ENCODE measurements at regions of chr2 and their contacts with region 1.

Region 1: DNA sequence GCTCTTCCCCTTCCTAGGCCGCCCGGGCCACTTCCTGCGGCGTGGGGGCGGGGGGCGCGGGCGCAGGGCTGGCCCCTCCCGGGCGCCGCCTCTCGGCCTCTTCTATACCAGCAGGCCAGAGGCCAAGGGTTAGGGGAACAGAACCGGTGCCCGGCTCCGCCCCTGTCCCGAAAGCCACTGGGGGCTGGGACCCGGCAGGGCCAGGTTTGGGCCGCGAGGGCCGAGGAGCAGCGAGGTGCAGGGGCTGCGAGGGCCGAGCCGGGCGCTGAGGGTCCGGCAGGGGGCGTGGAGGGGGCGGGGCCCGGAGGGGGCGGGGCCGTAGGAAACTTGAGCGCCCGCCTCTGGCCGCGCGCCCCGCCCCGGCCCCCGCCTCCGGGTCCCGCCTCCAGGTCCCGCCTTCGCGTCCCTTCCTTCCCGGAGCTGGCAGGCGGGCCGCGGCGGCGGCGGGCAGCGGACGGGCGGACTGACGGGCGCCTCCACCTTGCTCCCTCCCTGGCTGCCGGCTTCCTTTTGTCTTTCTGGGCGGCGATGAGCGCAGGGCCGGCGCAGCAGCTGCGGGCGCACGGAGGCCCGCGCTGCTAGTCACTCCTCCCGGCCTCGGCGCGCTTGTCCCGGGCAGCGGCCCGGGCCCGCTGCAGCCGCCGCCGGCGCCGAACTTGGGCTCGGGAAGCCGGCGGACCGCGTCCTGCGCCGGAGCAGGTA is at the start of gene HPCAL1:
- DNase-seq: peak; percentile 100
- H3K4me3 ChIP-seq: peak within 1 kb of the TSS; percentile 64 to 80
- H3K27ac ChIP-seq: peak within 1 kb of the TSS; percentile 15 to 85; a peak in 3 of 4 replicates
- H3K4me1 ChIP-seq: peaks cover 11 to 59% of the 10 kb centered on the region in 2 experiments
- H3K27me3 ChIP-seq: no peaks in the 10 kb centered on the region
- CTCF ChIP-seq: peak; percentile 63
- EP300 ChIP-seq: no peak
- RAD21 ChIP-seq: peak; percentile 34; the same call in 1 of the 2 replicates
- polyA plus RNA-seq, gene HPCAL1: 34.6 and 77.0 TPM in 2 replicates

Region 2: DNA sequence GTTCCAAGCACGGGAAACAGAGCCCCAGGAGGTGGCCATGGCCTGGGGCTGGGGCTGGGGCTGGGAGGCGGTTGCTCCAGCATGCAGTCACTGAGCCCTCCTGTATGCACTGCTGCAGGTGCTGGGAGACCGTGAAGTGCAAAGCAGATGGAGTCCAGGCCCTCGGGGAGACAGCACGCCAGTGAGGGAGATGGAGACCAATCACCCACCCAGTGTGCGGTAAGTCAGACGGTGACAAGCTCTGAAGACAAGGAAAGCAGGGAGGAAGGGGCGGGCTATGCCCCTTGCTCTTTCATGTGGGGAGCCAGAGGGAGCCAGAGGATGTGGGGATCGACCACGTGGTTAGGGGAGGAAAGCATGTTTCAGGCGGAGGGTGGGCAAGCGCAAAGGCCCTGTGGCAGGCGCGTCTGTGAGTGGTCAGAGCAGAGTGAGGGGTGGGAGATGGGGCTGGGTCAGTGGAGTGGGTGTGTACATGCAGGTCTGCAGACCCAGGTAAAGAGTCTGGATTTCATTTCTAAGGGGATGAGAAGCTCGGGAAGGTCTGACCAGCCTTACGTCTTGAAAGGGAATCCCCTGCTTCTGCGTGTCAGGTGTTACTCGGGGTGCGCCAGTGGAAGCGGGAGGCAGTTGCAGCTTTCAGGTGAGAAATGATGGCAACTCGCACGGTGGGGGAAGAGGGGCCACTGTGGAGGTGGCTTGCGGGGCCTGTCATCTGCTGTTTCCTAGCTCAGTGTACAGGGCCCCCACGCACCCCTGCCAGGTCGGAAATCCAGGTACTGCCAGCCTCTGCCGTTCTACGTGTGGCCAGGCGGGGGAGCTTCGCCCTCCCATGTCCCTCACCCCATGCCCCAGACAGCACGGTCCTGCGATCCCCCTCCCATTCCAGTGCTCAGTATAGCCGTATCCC is 160.6 kb before region 1 on chr2:
- CTCF ChIA-PET with region 1: interaction called, 32 read pairs
- POLR2A ChIA-PET with region 1: no interaction called
- DNase-seq: peak; percentile 88
- H3K4me3 ChIP-seq: no peak overlapping the region
- H3K27ac ChIP-seq: no peak overlapping the region
- H3K4me1 ChIP-seq: peaks cover 0 to 2% of the 10 kb centered on the region in 2 experiments; a peak in 1 of 4 replicates
- H3K27me3 ChIP-seq: no peaks in the 10 kb centered on the region
- CTCF ChIP-seq: peak; percentile 65
- EP300 ChIP-seq: no peak
- RAD21 ChIP-seq: peak; percentile 74

Region 3: DNA sequence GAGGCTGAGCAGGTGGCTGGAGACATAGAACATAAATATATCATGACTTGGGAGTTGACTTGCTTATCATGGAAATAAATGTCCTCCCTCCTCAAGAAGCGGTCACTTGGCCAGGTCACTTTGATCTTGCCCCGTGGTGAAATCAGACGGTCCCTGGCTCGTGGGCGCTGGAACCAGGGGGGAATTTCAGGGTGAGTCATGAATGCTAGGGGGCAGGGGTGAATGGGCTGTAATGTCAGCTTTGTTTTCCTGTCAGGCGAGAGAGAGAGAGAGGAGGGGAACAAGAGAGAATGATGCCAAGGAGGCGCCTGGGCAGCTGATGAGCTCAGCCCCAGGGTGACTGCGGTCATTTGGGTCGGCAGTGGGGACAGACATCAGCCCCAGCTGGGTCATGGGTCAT is 132.4 kb before region 1 on chr2:
- CTCF ChIA-PET with region 1: interaction called, 12 read pairs
- POLR2A ChIA-PET with region 1: interaction called, 5 read pairs
- DNase-seq: peak; percentile 63
- H3K4me3 ChIP-seq: no peak overlapping the region
- H3K27ac ChIP-seq: peak overlapping the region; percentile 37 to 90
- H3K4me1 ChIP-seq: peaks cover 19 to 63% of the 10 kb centered on the region in 2 experiments; a peak in 3 of 4 replicates
- H3K27me3 ChIP-seq: no peaks in the 10 kb centered on the region
- CTCF ChIP-seq: no peak
- EP300 ChIP-seq: no peak; a peak in 2 of 4 replicates
- RAD21 ChIP-seq: no peak

Region 4: DNA sequence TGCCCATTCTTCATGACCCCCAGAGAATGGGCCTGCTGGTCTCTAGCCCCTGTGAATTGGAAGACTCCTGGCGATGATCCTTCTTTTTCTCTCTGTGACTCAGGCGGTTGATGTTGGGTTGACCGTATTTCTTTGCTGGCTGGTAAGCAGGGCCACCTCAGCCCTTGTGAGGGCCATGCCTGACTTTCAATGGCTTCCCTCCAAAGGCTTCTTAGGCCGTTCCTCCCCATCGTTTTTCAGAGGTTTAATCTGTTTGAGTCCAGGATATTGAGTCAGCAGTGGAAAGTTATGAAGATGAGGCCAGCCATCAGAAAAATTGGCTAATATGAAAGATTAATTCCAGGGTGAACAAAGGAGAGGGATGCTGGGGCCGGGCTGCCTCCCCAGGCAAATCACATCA is 13.7 kb after region 1 on chr2:
- CTCF ChIA-PET with region 1: interaction called, 11 read pairs
- POLR2A ChIA-PET with region 1: no interaction called
- DNase-seq: no peak
- H3K4me3 ChIP-seq: no peak overlapping the region
- H3K27ac ChIP-seq: 0 out of 4 replicates have a peak overlapping the region, but pooled peaks of 1 of the 2 experiments have one; percentile 1
- H3K4me1 ChIP-seq: peaks cover 0 to 6% of the 10 kb centered on the region in 2 experiments; a peak in 1 of 4 replicates
- H3K27me3 ChIP-seq: no peaks in the 10 kb centered on the region
- CTCF ChIP-seq: no peak
- EP300 ChIP-seq: no peak
- RAD21 ChIP-seq: no peak

Region 5: GRCh38 chr2:10389573-10389972 is 86.9 kb after region 1 on chr2:
- CTCF ChIA-PET with region 1: interaction called, 16 read pairs
- POLR2A ChIA-PET with region 1: interaction called, 5 read pairs
- DNase-seq: no peak
- H3K4me3 ChIP-seq: no peak overlapping the region
- H3K27ac ChIP-seq: peak overlapping the region in 1 of 2 experiments; percentile 96; a peak in 2 of 4 replicates
- H3K4me1 ChIP-seq: peaks cover 10 to 94% of the 10 kb centered on the region in 2 experiments; a peak in 3 of 4 replicates
- H3K27me3 ChIP-seq: no peaks in the 10 kb centered on the region
- CTCF ChIP-seq: no peak
- EP300 ChIP-seq: no peak
- RAD21 ChIP-seq: no peak